ENCODE measurements at regions of chr20 and their contacts with region 1.

Region 1: DNA sequence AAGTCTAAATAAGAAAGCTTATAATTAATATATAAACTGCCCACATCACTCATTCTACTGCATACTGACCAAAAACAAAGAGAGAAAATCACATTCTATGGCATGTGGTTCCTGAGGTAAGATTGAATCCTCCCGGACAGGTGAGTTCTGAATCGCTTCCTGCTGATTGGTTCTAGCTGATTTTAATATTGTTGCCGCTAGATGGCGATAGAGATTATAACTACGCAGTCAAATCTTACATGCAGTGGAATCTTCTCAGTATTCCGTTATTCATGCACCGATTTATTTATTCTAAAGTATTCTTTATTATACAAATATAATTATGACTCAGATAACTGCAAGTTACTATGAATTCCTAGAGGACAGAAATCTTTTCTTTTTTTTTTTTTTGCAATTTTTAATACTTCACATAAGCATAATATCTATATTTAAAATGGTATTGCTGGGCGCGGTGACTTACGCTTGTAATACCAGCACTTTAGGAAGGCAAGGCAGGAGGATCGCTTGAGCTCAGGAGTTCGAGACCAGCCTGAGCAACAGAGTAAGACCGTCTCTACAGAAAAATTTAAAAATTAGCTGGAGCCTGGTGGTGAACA is 24.2 kb upstream of the TMX4 start:
- DNase-seq: peak; percentile 49
- ATAC-seq: peak; percentile 79
- H3K4me3 Mint-ChIP-seq: no peak overlapping the region
- H3K27ac Mint-ChIP-seq: no peak overlapping the region
- H3K4me1 Mint-ChIP-seq: peaks cover 1% of the 10 kb centered on the region
- H3K27me3 Mint-ChIP-seq: peaks cover 23% of the 10 kb centered on the region

Region 2: GRCh38 chr20:7703996-7704395 is 339.8 kb before region 1 on chr20:
- CTCF ChIA-PET with region 1: no interaction called
- POLR2A ChIA-PET with region 1: no interaction called
- DNase-seq: no peak
- ATAC-seq: no peak
- H3K4me3 Mint-ChIP-seq: no peak overlapping the region
- H3K27ac Mint-ChIP-seq: no peak overlapping the region
- H3K4me1 Mint-ChIP-seq: no peaks in the 10 kb centered on the region
- H3K27me3 Mint-ChIP-seq: no peaks in the 10 kb centered on the region

Region 3: DNA sequence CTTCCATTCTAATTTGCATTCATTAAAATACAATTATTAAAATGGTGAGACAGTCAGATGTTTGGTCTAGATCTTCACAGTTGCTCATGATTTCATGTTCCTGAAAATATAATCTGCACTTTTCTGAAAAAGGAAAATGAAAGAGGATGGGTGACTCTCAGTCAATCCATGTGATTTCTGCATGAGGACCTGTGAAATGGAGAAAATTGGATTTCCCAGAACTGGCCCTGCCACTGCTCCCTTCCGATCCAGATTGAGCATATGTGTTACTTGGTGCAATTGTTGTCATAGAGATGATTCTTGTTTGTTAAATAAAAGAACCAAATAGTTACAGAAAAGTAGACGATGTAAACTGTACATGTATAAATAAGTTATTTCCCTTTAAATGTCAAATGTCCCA is 140.9 kb before region 1 on chr20:
- CTCF ChIA-PET with region 1: no interaction called
- POLR2A ChIA-PET with region 1: no interaction called
- DNase-seq: no peak
- ATAC-seq: no peak
- H3K4me3 Mint-ChIP-seq: no peak overlapping the region
- H3K27ac Mint-ChIP-seq: no peak overlapping the region
- H3K4me1 Mint-ChIP-seq: no peaks in the 10 kb centered on the region
- H3K27me3 Mint-ChIP-seq: no peaks in the 10 kb centered on the region

Region 4: GRCh38 chr20:7935027-7935551 is 108.7 kb before region 1 on chr20:
- CTCF ChIA-PET with region 1: interaction called, 13 read pairs
- POLR2A ChIA-PET with region 1: no interaction called
- DNase-seq: no peak
- ATAC-seq: no peak
- H3K4me3 Mint-ChIP-seq: no peak overlapping the region
- H3K27ac Mint-ChIP-seq: no peak overlapping the region
- H3K4me1 Mint-ChIP-seq: no peaks in the 10 kb centered on the region
- H3K27me3 Mint-ChIP-seq: no peaks in the 10 kb centered on the region

Region 5: GRCh38 chr20:8019246-8019997 is 24.4 kb before region 1 on chr20 and contains the start of gene TMX4:
- CTCF ChIA-PET with region 1: interaction called, 21 read pairs
- POLR2A ChIA-PET with region 1: no interaction called
- DNase-seq: peak; percentile 93
- ATAC-seq: peak; percentile 85
- H3K4me3 Mint-ChIP-seq: peak within 1 kb of the TSS; percentile 91
- H3K27ac Mint-ChIP-seq: peak within 1 kb of the TSS; percentile 88
- H3K4me1 Mint-ChIP-seq: peaks cover 13% of the 10 kb centered on the region
- H3K27me3 Mint-ChIP-seq: no peaks in the 10 kb centered on the region
- total RNA-seq, gene TMX4: 24.9 to 31.6 TPM

Region 6: GRCh38 chr20:8094415-8094818 is 50.6 kb after region 1 on chr20:
- CTCF ChIA-PET with region 1: no interaction called
- POLR2A ChIA-PET with region 1: no interaction called
- DNase-seq: no peak
- ATAC-seq: no peak
- H3K4me3 Mint-ChIP-seq: no peak overlapping the region
- H3K27ac Mint-ChIP-seq: no peak overlapping the region
- H3K4me1 Mint-ChIP-seq: no peaks in the 10 kb centered on the region
- H3K27me3 Mint-ChIP-seq: peaks cover 3% of the 10 kb centered on the region

Region 7: DNA sequence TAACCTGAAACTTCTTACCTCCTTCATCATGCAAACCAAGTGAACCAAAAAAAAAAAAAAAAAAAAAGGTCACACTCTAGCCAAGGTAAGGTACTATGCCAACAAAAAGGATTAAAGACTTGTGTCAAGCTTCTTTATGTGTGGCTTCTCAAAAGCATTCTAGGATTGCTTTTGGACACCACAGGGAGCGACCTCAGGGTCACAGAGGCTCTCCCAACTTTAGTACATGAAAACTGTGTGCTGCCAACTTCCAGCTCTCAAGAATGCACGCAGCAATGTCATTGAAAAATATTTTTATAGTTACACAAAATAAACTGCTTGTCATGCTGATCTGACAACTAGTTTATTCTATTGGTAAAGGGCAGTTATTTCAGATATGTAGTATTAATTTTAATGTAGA is 332.1 kb after region 1 on chr20:
- CTCF ChIA-PET with region 1: no interaction called
- POLR2A ChIA-PET with region 1: no interaction called
- DNase-seq: no peak
- ATAC-seq: no peak
- H3K4me3 Mint-ChIP-seq: no peak overlapping the region
- H3K27ac Mint-ChIP-seq: no peak overlapping the region
- H3K4me1 Mint-ChIP-seq: no peaks in the 10 kb centered on the region
- H3K27me3 Mint-ChIP-seq: peaks cover 2% of the 10 kb centered on the region

Measured in activated CD8-positive, alpha-beta T cell treated with anti-CD3 and anti-CD28 coated beads, Interleukin-2, amount 10 ng/mL, durations not matched to agents 7 days and 5 days (primary cell).